ENCODE measurements at regions of chr22 and their contacts with region 1.

Region 1: DNA sequence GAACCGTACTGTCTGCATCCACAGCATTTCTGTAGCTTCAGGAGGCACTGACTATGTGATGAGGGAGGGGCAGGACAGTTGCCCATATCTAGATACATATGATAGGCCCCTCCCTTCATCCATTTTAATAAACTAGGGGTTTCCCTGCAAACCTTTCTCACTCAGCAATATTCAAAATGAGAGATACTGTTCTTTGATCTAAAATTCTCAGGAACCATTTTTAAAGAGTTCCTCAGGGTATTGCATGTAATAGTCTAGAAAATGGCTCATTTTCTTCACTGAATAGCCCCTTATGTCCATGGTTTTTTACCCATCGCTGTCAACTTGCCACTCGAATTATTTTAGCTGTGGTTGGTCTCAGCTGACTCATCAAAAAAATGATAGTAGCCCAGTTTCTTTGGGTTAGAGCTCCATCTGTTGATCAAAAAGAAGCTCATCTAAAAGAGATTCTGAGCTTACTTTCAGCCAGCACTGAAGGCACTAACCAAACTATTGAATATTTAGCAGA is 37.0 kb upstream of the DNAJB7 start:
- DNase-seq: peak; percentile 45
- H3K4me3 Mint-ChIP-seq: peak overlapping the region; percentile 17
- H3K27ac Mint-ChIP-seq: peak overlapping the region; percentile 54
- H3K4me1 Mint-ChIP-seq: peaks cover 12% of the 10 kb centered on the region
- H3K27me3 Mint-ChIP-seq: no peaks in the 10 kb centered on the region

Region 2: DNA sequence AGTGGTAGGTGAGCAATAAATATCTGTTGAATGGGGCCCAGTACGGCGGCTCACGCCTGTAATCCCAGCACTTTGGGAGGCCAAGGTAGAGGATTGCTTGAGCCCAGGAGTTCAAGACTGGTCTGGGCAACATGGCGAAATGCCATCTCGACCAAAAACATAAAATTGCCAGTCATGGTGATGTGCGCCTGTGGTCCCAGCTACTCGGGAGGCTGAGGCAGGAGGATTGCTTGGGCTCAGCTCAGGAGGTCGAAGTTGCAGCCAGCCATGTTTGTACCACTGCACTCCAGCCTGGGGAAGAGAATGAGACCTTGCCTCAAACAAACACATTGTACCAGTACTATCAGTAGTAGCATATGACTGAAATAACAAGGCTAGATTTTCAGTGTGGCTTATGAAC is 524.3 kb before region 1 on chr22:
- CTCF ChIA-PET with region 1: no interaction called
- intact Hi-C with region 1: loop called (anchors 5 kb)
- DNase-seq: no peak
- H3K4me3 Mint-ChIP-seq: no peak overlapping the region
- H3K27ac Mint-ChIP-seq: no peak overlapping the region
- H3K4me1 Mint-ChIP-seq: peaks cover 40% of the 10 kb centered on the region
- H3K27me3 Mint-ChIP-seq: no peaks in the 10 kb centered on the region

Region 3: DNA sequence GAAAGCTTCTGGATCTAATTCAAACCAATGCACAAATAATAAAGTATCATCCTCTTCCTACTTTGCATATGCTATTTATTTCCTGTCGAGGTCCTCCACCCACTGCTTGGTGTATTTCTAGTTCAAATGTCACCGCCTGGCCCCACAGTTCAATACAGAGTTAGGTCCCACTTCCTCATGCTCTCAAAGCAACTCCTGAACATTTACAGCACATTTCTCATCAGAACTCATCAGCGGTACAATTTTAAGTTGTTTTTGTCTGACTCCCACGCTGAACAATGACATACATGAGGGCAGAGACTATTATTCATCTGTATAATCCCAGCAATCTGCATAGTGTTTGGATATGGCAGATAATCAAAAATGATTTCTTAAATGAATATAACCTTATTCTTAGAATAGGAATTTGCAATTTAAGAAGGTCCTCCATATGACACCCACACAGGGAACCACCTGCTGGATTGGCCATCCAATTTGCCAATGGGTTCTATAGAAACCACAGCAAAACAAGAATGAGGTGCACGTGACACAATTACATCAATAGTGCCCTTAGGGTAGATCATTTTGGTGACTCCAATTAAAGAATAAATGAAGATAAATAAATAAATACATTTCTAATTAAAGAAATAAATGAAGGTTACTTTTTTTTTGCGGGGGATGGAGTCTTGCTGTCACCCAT is 134.0 kb before region 1 on chr22:
- CTCF ChIA-PET with region 1: no interaction called
- intact Hi-C with region 1: loop called (anchors 1 kb)
- DNase-seq: peak; percentile 48
- H3K4me3 Mint-ChIP-seq: no peak overlapping the region
- H3K27ac Mint-ChIP-seq: peak overlapping the region; percentile 82
- H3K4me1 Mint-ChIP-seq: peaks cover 22% of the 10 kb centered on the region
- H3K27me3 Mint-ChIP-seq: no peaks in the 10 kb centered on the region

Region 4: GRCh38 chr22:40818747-40819598 is 79.9 kb before region 1 on chr22 and contains the start of gene SLC25A17:
- CTCF ChIA-PET with region 1: interaction called, 9 read pairs
- intact Hi-C with region 1: loop called (anchors 2 kb)
- DNase-seq: peak; percentile 89
- H3K4me3 Mint-ChIP-seq: peak within 1 kb of the TSS; percentile 94
- H3K27ac Mint-ChIP-seq: peak within 1 kb of the TSS; percentile 83
- H3K4me1 Mint-ChIP-seq: peaks cover 34% of the 10 kb centered on the region
- H3K27me3 Mint-ChIP-seq: no peaks in the 10 kb centered on the region
- total RNA-seq, gene SLC25A17: 23.0 to 24.6 TPM

Region 5: DNA sequence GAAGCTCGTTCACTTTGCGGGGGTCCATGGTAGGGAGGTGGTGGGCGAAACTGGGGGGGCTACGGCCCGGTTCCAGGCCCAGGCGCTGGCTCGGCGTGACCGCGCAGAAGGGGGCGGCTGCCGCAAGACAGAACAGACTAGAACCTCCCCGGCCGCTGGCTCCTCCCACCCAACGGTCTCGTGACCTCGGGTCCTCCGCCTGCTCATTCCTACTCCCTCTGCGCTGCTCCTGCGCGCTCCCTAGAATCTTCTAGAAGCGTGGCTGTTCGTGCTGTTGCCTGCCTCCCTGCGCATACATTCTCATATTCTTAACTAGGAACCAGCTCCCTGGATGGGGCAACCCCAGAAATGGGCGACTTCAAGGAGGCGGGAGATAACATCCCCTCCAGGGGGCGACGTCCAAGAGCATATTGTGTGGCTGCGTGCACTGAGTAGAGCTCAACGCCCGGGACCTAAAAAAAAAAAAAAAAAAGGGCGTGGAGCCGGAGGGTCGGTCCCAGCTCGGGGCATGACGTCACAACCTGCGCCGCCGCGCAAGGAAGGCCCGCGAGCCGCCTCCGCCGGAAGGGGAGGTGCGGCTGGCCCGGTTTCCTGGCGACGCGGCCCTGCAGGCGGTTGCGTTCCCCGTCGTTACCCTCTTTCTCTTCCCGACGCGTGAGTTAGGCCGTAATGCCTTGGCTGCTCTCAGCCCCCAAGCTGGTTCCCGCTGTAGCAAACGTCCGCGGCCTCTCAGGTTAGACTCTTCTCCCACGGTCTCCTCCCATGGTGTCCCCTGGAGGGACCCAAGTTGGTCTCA is 42.2 kb before region 1 on chr22 and contains the starts of genes ST13 and XPNPEP3:
- CTCF ChIA-PET with region 1: interaction called, 5 read pairs
- intact Hi-C with region 1: loop called (anchors 1 kb)
- DNase-seq: peak; percentile 98
- H3K4me3 Mint-ChIP-seq: peak within 1 kb of the TSS; percentile 95
- H3K27ac Mint-ChIP-seq: peak within 1 kb of the TSS; percentile 99
- H3K4me1 Mint-ChIP-seq: peaks cover 51% of the 10 kb centered on the region
- H3K27me3 Mint-ChIP-seq: no peaks in the 10 kb centered on the region
- total RNA-seq, gene ST13: 240 to 254 TPM
- total RNA-seq, gene XPNPEP3: 15.7 to 19.6 TPM

Measured in activated naive CD4-positive, alpha-beta T cell treated with anti-CD3 and anti-CD28 coated beads for 36 hours (primary cell).